OCI-LY7 (cell line): ENCODE measurements at regions of chr6 and their contacts with region 1.

Region 1: GRCh38 chr6:149431905-149432775 is 32.1 kb downstream of the SUMO4 start:
- DNase-seq: peak; percentile 88
- H3K4me3 ChIP-seq: no peak overlapping the region
- H3K27ac ChIP-seq: no peak overlapping the region
- H3K4me1 ChIP-seq: peaks cover 7% of the 10 kb centered on the region
- CTCF ChIP-seq: peak; percentile 95

Region 2: GRCh38 chr6:148885136-148885870 is 546.8 kb before region 1 on chr6:
- CTCF ChIA-PET with region 1: no interaction called
- POLR2A ChIA-PET with region 1: no interaction called
- intact Hi-C with region 1: no loop called
- DNase-seq: no peak
- H3K4me3 ChIP-seq: no peak overlapping the region
- H3K27ac ChIP-seq: no peak overlapping the region
- H3K4me1 ChIP-seq: no peaks in the 10 kb centered on the region
- CTCF ChIP-seq: no peak

Region 3: GRCh38 chr6:149082286-149082707 is 349.8 kb before region 1 on chr6:
- CTCF ChIA-PET with region 1: interaction called, 7 read pairs
- POLR2A ChIA-PET with region 1: no interaction called
- intact Hi-C with region 1: loop called (anchors 1 kb)
- DNase-seq: peak; percentile 77
- H3K4me3 ChIP-seq: no peak overlapping the region
- H3K27ac ChIP-seq: no peak overlapping the region
- H3K4me1 ChIP-seq: no peaks in the 10 kb centered on the region
- CTCF ChIP-seq: peak; percentile 86